Caco-2 (cell line): ENCODE measurements at regions of chr17 and their contacts with region 1.

Region 1: GRCh38 chr17:47840740-47841603 is at the start of gene SCRN2:
- DNase-seq: peak; percentile 98 to 100
- H3K4me3 ChIP-seq: peak within 1 kb of the TSS; percentile 63
- H3K4me3 Mint-ChIP-seq: peak within 1 kb of the TSS; percentile 80
- H3K27ac Mint-ChIP-seq: peak within 1 kb of the TSS; percentile 76
- H3K4me1 ChIP-seq: peaks cover 47% of the 10 kb centered on the region
- H3K4me1 Mint-ChIP-seq: peaks cover 44% of the 10 kb centered on the region
- H3K27me3 ChIP-seq: no peaks in the 10 kb centered on the region
- H3K27me3 Mint-ChIP-seq: no peaks in the 10 kb centered on the region
- CTCF ChIP-seq: peak; percentile 100
- total RNA-seq, gene SCRN2: 73.6 and 80.8 TPM in 2 replicates

Region 2: GRCh38 chr17:47810205-47810821 is 30.7 kb before region 1 on chr17:
- CTCF ChIA-PET with region 1: interaction called, 5 read pairs
- POLR2A ChIA-PET with region 1: no interaction called
- intact Hi-C with region 1: loop called (anchors 1 kb)
- DNase-seq: peak; percentile 100
- H3K4me3 ChIP-seq: no peak overlapping the region
- H3K4me3 Mint-ChIP-seq: peak overlapping the region; percentile 56
- H3K27ac Mint-ChIP-seq: peak overlapping the region; percentile 93
- H3K4me1 ChIP-seq: peaks cover 36% of the 10 kb centered on the region
- H3K4me1 Mint-ChIP-seq: peaks cover 36% of the 10 kb centered on the region
- H3K27me3 ChIP-seq: no peaks in the 10 kb centered on the region
- H3K27me3 Mint-ChIP-seq: no peaks in the 10 kb centered on the region
- CTCF ChIP-seq: no peak

Region 3: DNA sequence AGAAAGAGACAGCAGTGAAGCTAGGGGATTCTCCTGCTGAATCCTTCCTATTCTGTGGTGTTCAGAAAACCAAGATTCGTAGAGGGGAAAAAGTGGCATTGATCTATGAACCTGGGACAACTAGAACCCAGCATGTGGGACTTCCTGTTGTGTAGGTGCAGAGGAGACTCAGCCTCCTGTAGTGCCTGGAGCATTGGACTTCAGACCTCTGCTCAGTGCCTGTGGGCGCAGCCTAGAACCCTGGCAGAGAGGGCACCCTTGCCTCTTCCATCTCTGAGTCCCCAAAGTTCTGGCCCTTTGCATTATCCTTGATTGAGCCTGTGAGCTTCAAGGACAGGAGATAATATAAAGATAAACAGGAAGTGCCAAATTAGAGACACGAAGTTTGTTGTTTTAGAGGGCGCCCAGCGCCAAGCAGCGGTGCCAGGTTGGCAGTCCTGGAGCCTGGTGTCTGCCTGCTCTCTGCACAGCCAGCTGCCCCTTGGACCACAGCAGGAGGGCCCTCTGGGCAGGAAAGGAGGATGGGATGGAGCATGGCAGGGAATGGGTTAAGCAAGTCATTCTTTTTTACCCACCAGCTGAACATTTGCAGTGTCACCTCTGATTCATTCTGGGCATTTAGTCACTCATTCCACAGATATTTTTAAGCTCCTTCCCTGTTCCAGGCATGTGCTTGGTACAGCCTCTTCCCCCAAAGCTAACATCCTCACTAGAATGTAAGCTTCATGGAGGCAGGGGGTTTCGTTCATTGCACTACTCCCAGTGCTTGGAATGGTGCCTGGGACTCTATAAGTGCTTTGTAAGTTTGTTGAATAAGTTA is 21.9 kb after region 1 on chr17:
- CTCF ChIA-PET with region 1: interaction called, 16 read pairs
- POLR2A ChIA-PET with region 1: no interaction called
- intact Hi-C with region 1: loop called (anchors 2 kb)
- DNase-seq: no peak
- H3K4me3 ChIP-seq: no peak overlapping the region
- H3K4me3 Mint-ChIP-seq: no peak overlapping the region
- H3K27ac Mint-ChIP-seq: peak overlapping the region; percentile 2
- H3K4me1 ChIP-seq: peaks cover 26% of the 10 kb centered on the region
- H3K4me1 Mint-ChIP-seq: peaks cover 16% of the 10 kb centered on the region
- H3K27me3 ChIP-seq: no peaks in the 10 kb centered on the region
- H3K27me3 Mint-ChIP-seq: no peaks in the 10 kb centered on the region
- CTCF ChIP-seq: no peak

Region 4: DNA sequence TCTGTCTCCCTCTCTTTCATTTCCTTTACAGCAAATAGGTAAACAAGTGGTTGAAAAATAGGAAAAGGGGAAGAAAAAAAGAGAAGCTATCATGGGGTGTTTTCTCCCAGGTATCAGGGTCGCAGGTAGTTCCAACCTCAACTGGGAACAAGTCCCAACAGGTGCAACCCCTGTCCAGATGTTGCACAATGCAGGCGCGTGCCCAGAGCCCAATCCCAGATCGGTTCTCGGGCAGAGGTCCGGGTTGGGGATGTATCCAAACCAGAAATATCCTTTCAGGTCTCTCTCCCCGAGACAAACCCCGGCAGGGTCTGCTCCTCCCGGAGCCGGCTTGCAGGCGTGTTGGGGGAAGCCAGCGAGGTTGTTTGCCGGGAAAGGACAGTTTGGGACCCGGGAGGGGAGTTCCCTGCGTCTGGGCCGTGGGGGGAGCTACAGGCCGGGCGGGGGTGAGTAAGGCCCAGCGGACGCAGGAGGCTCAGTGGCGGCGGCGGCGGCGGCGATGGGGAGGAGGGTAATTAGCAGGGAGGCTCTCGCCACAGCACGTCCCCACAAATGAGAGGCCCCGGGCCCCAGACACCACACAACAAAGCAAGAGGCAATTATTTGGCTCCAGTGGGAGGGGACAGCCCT is 31.2 kb after region 1 on chr17:
- CTCF ChIA-PET with region 1: interaction called, 37 read pairs
- POLR2A ChIA-PET with region 1: no interaction called
- intact Hi-C with region 1: no loop called
- DNase-seq: no peak
- H3K4me3 ChIP-seq: no peak overlapping the region
- H3K4me3 Mint-ChIP-seq: no peak overlapping the region
- H3K27ac Mint-ChIP-seq: no peak overlapping the region
- H3K4me1 ChIP-seq: peaks cover 48% of the 10 kb centered on the region
- H3K4me1 Mint-ChIP-seq: peaks cover 15% of the 10 kb centered on the region
- H3K27me3 ChIP-seq: no peaks in the 10 kb centered on the region; the same call in 1 of the 2 replicates
- H3K27me3 Mint-ChIP-seq: no peaks in the 10 kb centered on the region
- CTCF ChIP-seq: no peak

Region 5: GRCh38 chr17:47889734-47890529 is 49.0 kb after region 1 on chr17:
- CTCF ChIA-PET with region 1: interaction called, 904 read pairs
- POLR2A ChIA-PET with region 1: interaction called, 19 read pairs
- intact Hi-C with region 1: loop called (anchors 1 kb)
- DNase-seq: peak; percentile 97 to 99
- H3K4me3 ChIP-seq: no peak overlapping the region
- H3K4me3 Mint-ChIP-seq: no peak overlapping the region
- H3K27ac Mint-ChIP-seq: no peak overlapping the region
- H3K4me1 ChIP-seq: peaks cover 23% of the 10 kb centered on the region
- H3K4me1 Mint-ChIP-seq: peaks cover 31% of the 10 kb centered on the region
- H3K27me3 ChIP-seq: no peaks in the 10 kb centered on the region
- H3K27me3 Mint-ChIP-seq: no peaks in the 10 kb centered on the region
- CTCF ChIP-seq: peak; percentile 100

Region 6: DNA sequence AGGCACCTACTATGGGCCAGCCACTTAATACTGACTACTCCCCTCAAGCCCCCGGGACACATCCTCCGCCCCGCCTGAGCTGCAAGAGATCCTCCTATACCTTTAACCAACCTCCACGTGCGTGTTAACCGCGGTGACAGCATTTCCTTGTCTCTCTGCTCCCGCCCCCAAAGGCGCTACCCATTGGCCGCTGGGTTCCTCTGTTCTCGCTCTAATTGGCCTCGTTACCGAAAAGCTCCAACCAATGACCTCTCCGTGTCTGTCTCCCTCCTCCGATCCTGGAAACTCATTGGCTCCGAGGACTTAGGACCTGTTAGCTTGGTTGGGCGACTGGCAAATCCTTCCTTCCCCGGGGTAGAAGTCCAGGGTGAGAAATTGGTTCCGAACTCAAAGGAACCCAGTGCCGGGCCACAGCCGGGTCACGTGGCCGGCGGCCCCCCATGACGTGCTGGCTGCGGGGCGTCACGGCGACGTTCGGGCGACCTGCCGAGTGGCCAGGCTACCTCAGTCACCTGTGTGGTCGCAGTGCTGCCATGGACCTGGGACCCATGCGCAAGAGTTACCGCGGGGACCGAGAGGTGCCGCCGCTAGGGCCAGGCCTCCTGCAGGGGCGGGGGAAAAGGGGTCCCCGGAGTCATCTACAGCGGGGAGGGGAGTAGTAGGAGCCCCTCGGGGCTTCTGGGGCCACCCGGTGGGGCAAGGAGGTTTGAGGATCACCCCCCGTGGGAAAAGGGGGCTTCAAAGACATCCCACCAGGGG is 100.4 kb after region 1 on chr17 and contains the start of gene PNPO:
- CTCF ChIA-PET with region 1: interaction called, 27 read pairs
- POLR2A ChIA-PET with region 1: interaction called, 3 read pairs
- intact Hi-C with region 1: no loop called
- DNase-seq: peak; percentile 100
- H3K4me3 ChIP-seq: peak within 1 kb of the TSS; percentile 69
- H3K4me3 Mint-ChIP-seq: peak within 1 kb of the TSS; percentile 82
- H3K27ac Mint-ChIP-seq: peak within 1 kb of the TSS; percentile 75
- H3K4me1 ChIP-seq: peaks cover 12% of the 10 kb centered on the region; the same call in 1 of the 2 replicates
- H3K4me1 Mint-ChIP-seq: peaks cover 23% of the 10 kb centered on the region
- H3K27me3 ChIP-seq: no peaks in the 10 kb centered on the region
- H3K27me3 Mint-ChIP-seq: no peaks in the 10 kb centered on the region
- CTCF ChIP-seq: peak; percentile 45 to 48
- total RNA-seq, gene PNPO: 110 and 118 TPM in 2 replicates

Region 7: GRCh38 chr17:47949136-47949759 is 108.3 kb after region 1 on chr17:
- CTCF ChIA-PET with region 1: interaction called, 20 read pairs
- POLR2A ChIA-PET with region 1: no interaction called
- intact Hi-C with region 1: loop called (anchors 1 kb)
- DNase-seq: peak; percentile 96 to 99
- H3K4me3 ChIP-seq: peak overlapping the region; percentile 1; the same call in 1 of the 2 replicates
- H3K4me3 Mint-ChIP-seq: peak overlapping the region; percentile 55
- H3K27ac Mint-ChIP-seq: peak overlapping the region; percentile 58
- H3K4me1 ChIP-seq: peaks cover 14% of the 10 kb centered on the region
- H3K4me1 Mint-ChIP-seq: peaks cover 28% of the 10 kb centered on the region
- H3K27me3 ChIP-seq: no peaks in the 10 kb centered on the region
- H3K27me3 Mint-ChIP-seq: no peaks in the 10 kb centered on the region
- CTCF ChIP-seq: peak; percentile 100

Region 8: DNA sequence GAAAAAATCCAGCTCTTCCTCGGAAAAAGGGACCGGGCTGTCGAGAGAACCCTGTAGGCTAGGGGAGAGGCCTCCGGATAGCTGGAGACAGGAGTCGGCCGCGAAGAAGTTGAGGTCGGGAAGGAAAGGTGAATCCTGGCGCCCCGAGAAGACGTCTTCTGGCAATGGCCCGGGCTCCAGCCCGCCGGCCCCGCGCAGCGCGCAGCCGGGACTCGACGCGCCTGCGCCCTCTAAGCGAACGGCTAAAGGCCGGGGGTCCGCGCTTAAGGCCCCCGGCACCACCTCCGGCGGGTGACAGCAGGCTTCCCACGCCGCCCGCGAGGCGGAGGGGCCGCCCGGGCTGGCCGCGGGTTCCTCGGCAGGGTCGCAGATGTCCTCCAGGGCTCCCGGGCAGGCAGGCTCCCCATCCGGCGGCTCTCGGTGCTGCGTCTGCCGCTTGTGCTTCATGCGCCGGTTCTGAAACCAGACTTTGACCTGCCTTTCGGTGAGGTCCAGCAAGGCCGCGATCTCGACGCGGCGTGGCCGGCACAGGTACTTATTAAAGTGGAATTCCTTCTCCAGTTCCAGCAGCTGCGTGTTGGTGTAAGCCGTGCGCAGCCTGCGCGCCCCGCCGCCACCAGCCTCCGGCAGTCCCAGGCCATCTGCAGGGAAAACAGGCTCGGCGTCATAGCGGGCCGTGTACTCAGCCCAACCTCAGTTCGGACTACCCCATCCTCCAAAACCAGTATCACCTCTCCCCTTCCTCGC is 702.3 kb after region 1 on chr17:
- CTCF ChIA-PET with region 1: no interaction called
- POLR2A ChIA-PET with region 1: no interaction called
- intact Hi-C with region 1: no loop called
- DNase-seq: peak; percentile 92
- H3K4me3 ChIP-seq: peak overlapping the region; percentile 55
- H3K4me3 Mint-ChIP-seq: peak overlapping the region; percentile 78
- H3K27ac Mint-ChIP-seq: peak overlapping the region; percentile 31
- H3K4me1 ChIP-seq: peaks cover 10% of the 10 kb centered on the region; the same call in 1 of the 2 replicates
- H3K4me1 Mint-ChIP-seq: peaks cover 11% of the 10 kb centered on the region
- H3K27me3 ChIP-seq: no peaks in the 10 kb centered on the region
- H3K27me3 Mint-ChIP-seq: peaks cover 8% of the 10 kb centered on the region
- CTCF ChIP-seq: peak; percentile 68 to 70